ENCODE measurements at regions of chr14 and their contacts with region 1.

Region 1: GRCh38 chr14:58072288-58073071 is 79.5 kb downstream of the ARMH4 start:
- DNase-seq: peak in 12 of 14 experiments; percentile 0 to 68 (median 20)
- ATAC-seq: peak; percentile 68
- H3K4me3 ChIP-seq: no peak overlapping the region
- H3K4me3 Mint-ChIP-seq: no peak overlapping the region
- H3K27ac ChIP-seq: no peak overlapping the region
- H3K27ac Mint-ChIP-seq: no peak overlapping the region
- H3K4me1 ChIP-seq: no peaks in the 10 kb centered on the region
- H3K4me1 Mint-ChIP-seq: no peaks in the 10 kb centered on the region
- H3K27me3 ChIP-seq: peaks cover 0 to 4% of the 10 kb centered on the region in 2 experiments
- H3K27me3 Mint-ChIP-seq: peaks cover 24% of the 10 kb centered on the region
- CTCF ChIP-seq: peak; percentile 68

Region 2: DNA sequence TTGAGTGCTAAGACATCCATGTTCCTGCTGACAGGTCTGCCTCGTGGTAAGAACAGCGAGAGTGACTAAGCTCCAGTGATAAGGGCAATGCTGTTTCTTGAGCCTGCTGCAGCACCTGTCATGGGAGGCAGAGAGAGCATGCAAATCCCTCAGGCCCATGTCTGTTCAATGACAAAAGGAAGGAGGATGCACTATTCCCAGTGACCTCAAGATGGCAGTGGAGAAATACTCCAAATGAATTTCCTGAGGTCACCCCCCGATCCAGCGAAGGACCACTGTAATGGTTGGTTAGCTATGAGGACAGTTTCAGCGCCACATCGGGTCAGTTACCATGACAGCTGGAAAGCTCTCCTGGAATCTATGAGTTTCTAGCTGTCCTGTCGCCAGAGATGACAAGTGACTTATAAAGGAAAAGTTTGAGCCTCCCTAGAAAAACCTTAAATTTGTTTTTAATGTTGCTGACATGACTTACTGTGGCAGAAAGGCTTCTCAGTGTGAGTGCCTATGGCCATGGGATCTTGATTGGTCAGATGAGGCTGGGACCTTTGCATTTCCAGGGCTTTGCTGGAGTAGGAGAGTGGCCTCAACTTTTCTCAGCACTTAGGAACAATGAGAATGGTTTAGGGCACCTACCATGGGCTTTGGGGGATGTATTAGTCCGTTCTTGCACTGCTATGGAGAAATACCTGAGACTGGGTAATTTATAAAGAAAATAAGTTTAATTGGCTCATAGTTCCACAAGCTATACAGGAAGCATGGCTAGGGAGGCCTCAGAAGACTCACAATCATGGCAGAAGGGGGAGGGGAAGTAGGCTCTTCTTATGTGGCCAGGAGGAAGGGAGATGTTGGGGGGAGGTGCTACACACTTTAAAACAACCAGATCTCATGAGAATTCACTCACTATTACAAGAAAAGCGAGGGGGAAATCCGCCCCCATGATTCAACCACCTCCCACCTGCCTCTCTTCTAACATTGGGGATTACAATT is 1580.9 kb before region 1 on chr14:
- CTCF ChIA-PET with region 1: no interaction called
- POLR2A ChIA-PET with region 1: no interaction called
- intact Hi-C with region 1: loop called in 1 of 2 experiments (anchors 10 kb)
- DNase-seq: peak in 6 of 14 experiments; percentile 3 to 60 (median 31)
- ATAC-seq: peak; percentile 48
- H3K4me3 ChIP-seq: no peak overlapping the region
- H3K4me3 Mint-ChIP-seq: no peak overlapping the region
- H3K27ac ChIP-seq: no peak overlapping the region
- H3K27ac Mint-ChIP-seq: no peak overlapping the region
- H3K4me1 ChIP-seq: peaks cover 5% of the 10 kb centered on the region
- H3K4me1 Mint-ChIP-seq: peaks cover 11% of the 10 kb centered on the region
- H3K27me3 ChIP-seq: no peaks in the 10 kb centered on the region
- H3K27me3 Mint-ChIP-seq: peaks cover 10% of the 10 kb centered on the region
- CTCF ChIP-seq: peak; percentile 55

Region 3: GRCh38 chr14:57486767-57487379 is 585.6 kb before region 1 on chr14:
- CTCF ChIA-PET with region 1: no interaction called
- POLR2A ChIA-PET with region 1: no interaction called
- intact Hi-C with region 1: loop called (anchors 2 to 5 kb)
- DNase-seq: peak in 3 of 14 experiments; percentile 1 to 7 (median 4)
- ATAC-seq: no peak
- H3K4me3 ChIP-seq: no peak overlapping the region
- H3K4me3 Mint-ChIP-seq: no peak overlapping the region
- H3K27ac ChIP-seq: no peak overlapping the region
- H3K27ac Mint-ChIP-seq: no peak overlapping the region
- H3K4me1 ChIP-seq: peaks cover 2% of the 10 kb centered on the region
- H3K4me1 Mint-ChIP-seq: no peaks in the 10 kb centered on the region
- H3K27me3 ChIP-seq: no peaks in the 10 kb centered on the region
- H3K27me3 Mint-ChIP-seq: peaks cover 7% of the 10 kb centered on the region
- CTCF ChIP-seq: peak; percentile 32

Region 4: GRCh38 chr14:58100735-58101368 is 28.4 kb after region 1 on chr14:
- CTCF ChIA-PET with region 1: no interaction called
- POLR2A ChIA-PET with region 1: no interaction called
- intact Hi-C with region 1: no loop called
- DNase-seq: no peak
- ATAC-seq: no peak
- H3K4me3 ChIP-seq: no peak overlapping the region
- H3K4me3 Mint-ChIP-seq: no peak overlapping the region
- H3K27ac ChIP-seq: no peak overlapping the region
- H3K27ac Mint-ChIP-seq: no peak overlapping the region
- H3K4me1 ChIP-seq: no peaks in the 10 kb centered on the region
- H3K4me1 Mint-ChIP-seq: no peaks in the 10 kb centered on the region
- H3K27me3 ChIP-seq: peaks cover 0 to 2% of the 10 kb centered on the region in 2 experiments
- H3K27me3 Mint-ChIP-seq: peaks cover 12% of the 10 kb centered on the region
- CTCF ChIP-seq: no peak